ENCODE measurements at regions of chr1 and their contacts with region 1.

Region 1: GRCh38 chr1:201828820-201829774 is at the start of gene IPO9:
- DNase-seq: peak; percentile 93
- H3K4me3 Mint-ChIP-seq: peak within 1 kb of the TSS; percentile 96
- H3K27ac Mint-ChIP-seq: peak within 1 kb of the TSS; percentile 88
- H3K4me1 Mint-ChIP-seq: peaks cover 43% of the 10 kb centered on the region
- H3K27me3 Mint-ChIP-seq: peaks cover 3% of the 10 kb centered on the region
- total RNA-seq, gene IPO9: 58.5 and 61.6 TPM in 2 replicates

Region 2: GRCh38 chr1:201154389-201155165 is 674.5 kb before region 1 on chr1 and contains the start of gene TMEM9:
- intact Hi-C with region 1: loop called (anchors 5 kb)
- DNase-seq: peak; percentile 95
- H3K4me3 Mint-ChIP-seq: peak within 1 kb of the TSS; percentile 85
- H3K27ac Mint-ChIP-seq: peak within 1 kb of the TSS; percentile 88
- H3K4me1 Mint-ChIP-seq: peaks cover 23% of the 10 kb centered on the region
- H3K27me3 Mint-ChIP-seq: peaks cover 18% of the 10 kb centered on the region
- total RNA-seq, gene TMEM9: 13.2 and 13.9 TPM in 2 replicates

Region 3: GRCh38 chr1:201877877-201878401 is 48.8 kb after region 1 on chr1:
- intact Hi-C with region 1: no loop called
- DNase-seq: no peak
- H3K4me3 Mint-ChIP-seq: no peak overlapping the region
- H3K27ac Mint-ChIP-seq: no peak overlapping the region
- H3K4me1 Mint-ChIP-seq: no peaks in the 10 kb centered on the region
- H3K27me3 Mint-ChIP-seq: no peaks in the 10 kb centered on the region

Region 4: GRCh38 chr1:201982623-201983379 is 153.7 kb after region 1 on chr1 and contains the start of gene RNPEP:
- intact Hi-C with region 1: loop called (anchors 1 kb)
- DNase-seq: peak; percentile 38
- H3K4me3 Mint-ChIP-seq: peak within 1 kb of the TSS; percentile 98
- H3K27ac Mint-ChIP-seq: peak within 1 kb of the TSS; percentile 90
- H3K4me1 Mint-ChIP-seq: peaks cover 25% of the 10 kb centered on the region
- H3K27me3 Mint-ChIP-seq: peaks cover 6% of the 10 kb centered on the region
- total RNA-seq, gene RNPEP: 31.1 and 34.2 TPM in 2 replicates

Region 5: GRCh38 chr1:202009326-202010179 is 180.5 kb after region 1 on chr1:
- intact Hi-C with region 1: no loop called
- DNase-seq: peak; percentile 42
- H3K4me3 Mint-ChIP-seq: no peak overlapping the region
- H3K27ac Mint-ChIP-seq: no peak overlapping the region
- H3K4me1 Mint-ChIP-seq: no peaks in the 10 kb centered on the region
- H3K27me3 Mint-ChIP-seq: no peaks in the 10 kb centered on the region

Region 6: GRCh38 chr1:202029171-202029665 is 200.1 kb after region 1 on chr1:
- intact Hi-C with region 1: no loop called
- DNase-seq: no peak
- H3K4me3 Mint-ChIP-seq: no peak overlapping the region
- H3K27ac Mint-ChIP-seq: no peak overlapping the region
- H3K4me1 Mint-ChIP-seq: no peaks in the 10 kb centered on the region
- H3K27me3 Mint-ChIP-seq: peaks cover 4% of the 10 kb centered on the region

Region 7: GRCh38 chr1:202144402-202145067 is 315.4 kb after region 1 on chr1 and contains the start of gene ARL8A:
- intact Hi-C with region 1: loop called (anchors 1 kb)
- DNase-seq: peak; percentile 71
- H3K4me3 Mint-ChIP-seq: peak within 1 kb of the TSS; percentile 88
- H3K27ac Mint-ChIP-seq: peak within 1 kb of the TSS; percentile 91
- H3K4me1 Mint-ChIP-seq: peaks cover 26% of the 10 kb centered on the region
- H3K27me3 Mint-ChIP-seq: no peaks in the 10 kb centered on the region
- total RNA-seq, gene ARL8A: 56.6 and 69.0 TPM in 2 replicates

Measured in activated T-helper 1 cell treated with anti-CD3 and anti-CD28 coated beads, Interleukin-12 subunit alpha, Interleukin-12 subunit beta, Interleukin-2, Interleukin-4 antibody, amounts not matched to agents 30 ng/mL and 10 ng/mL and 1 ng/mL, durations not matched to agents 14 hours and 24 hours and 36 hours (primary cell).